ENCODE measurements at regions of chr6 and their contacts with region 1.

Region 1: GRCh38 chr6:169513478-169514193 is 188.2 kb downstream of the WDR27 start:
- DNase-seq: no peak
- H3K4me3 Mint-ChIP-seq: no peak overlapping the region
- H3K27ac Mint-ChIP-seq: no peak overlapping the region
- H3K4me1 Mint-ChIP-seq: no peaks in the 10 kb centered on the region
- H3K27me3 Mint-ChIP-seq: no peaks in the 10 kb centered on the region

Region 2: DNA sequence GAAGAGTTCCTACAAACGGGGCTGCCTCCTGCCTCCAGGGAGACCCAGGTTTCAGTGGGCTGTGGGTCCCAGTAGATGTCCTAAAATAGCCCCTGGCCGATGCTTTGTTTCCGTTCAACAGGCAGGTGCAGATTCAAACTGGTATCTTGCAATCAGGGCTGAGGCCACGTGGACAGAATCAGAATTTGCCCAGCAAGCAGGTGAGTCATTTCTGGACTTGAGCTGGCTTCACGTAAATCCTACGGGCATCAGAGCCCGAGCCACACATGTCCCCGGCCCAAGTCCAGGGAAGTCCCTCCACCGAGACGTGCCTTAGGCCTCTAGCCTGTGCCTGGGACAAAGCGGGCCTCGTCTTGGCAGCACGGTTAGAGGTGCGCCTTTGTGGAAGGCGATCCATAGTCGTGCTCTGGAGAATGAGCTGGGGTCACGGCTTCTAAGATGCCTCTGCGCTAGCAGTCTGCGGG is 1333.1 kb before region 1 on chr6:
- CTCF ChIA-PET with region 1: no interaction called
- intact Hi-C with region 1: no loop called
- DNase-seq: no peak
- H3K4me3 Mint-ChIP-seq: no peak overlapping the region
- H3K27ac Mint-ChIP-seq: no peak overlapping the region
- H3K4me1 Mint-ChIP-seq: no peaks in the 10 kb centered on the region
- H3K27me3 Mint-ChIP-seq: peaks cover 3% of the 10 kb centered on the region

Region 3: DNA sequence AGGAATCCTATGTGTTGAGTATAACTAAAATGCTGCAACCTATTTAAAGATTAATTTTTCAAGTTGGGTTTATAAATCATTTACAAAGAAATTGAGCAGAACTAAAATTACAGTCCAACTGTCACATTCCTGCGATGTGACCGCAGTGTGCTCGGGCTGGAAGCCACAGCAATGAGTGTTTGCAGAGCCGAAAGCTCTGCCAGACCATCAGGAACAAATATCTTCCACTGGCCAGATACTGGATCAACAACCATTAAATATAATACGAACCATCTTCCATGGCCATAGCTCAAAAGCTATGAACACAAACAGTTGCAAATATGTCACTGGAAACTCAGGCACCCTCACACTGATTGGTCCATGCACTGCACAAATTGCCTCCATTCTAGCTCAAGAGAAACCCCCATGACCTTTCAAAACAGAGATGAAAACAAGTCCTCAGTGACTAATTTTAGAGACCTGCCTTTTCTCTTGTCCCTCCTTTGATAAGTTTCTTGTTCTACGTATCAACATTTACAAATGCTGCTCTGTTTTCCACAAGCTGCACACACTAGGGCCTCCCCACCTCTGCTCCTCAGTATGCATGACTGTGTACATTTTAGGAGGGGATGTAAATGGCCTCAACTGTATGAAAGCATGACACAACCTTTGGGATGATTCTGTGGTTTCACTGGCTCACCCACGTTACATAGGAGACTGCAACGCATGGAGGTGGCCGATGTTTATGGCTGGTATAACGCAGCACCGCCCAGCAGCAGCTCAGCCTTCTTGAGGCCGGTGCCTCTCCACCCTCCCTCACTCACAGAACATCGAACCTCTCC is 16.5 kb after region 1 on chr6:
- CTCF ChIA-PET with region 1: no interaction called
- intact Hi-C with region 1: no loop called
- DNase-seq: peak; percentile 28
- H3K4me3 Mint-ChIP-seq: no peak overlapping the region
- H3K27ac Mint-ChIP-seq: no peak overlapping the region
- H3K4me1 Mint-ChIP-seq: peaks cover 13% of the 10 kb centered on the region
- H3K27me3 Mint-ChIP-seq: no peaks in the 10 kb centered on the region

Region 4: GRCh38 chr6:169654598-169655391 is 141.2 kb after region 1 on chr6:
- CTCF ChIA-PET with region 1: no interaction called
- intact Hi-C with region 1: loop called (anchors 5 kb)
- DNase-seq: peak; percentile 68
- H3K4me3 Mint-ChIP-seq: peak overlapping the region; percentile 79
- H3K27ac Mint-ChIP-seq: peak overlapping the region; percentile 25
- H3K4me1 Mint-ChIP-seq: peaks cover 3% of the 10 kb centered on the region
- H3K27me3 Mint-ChIP-seq: no peaks in the 10 kb centered on the region